ENCODE measurements at regions of chr20 and their contacts with region 1.

Region 1: GRCh38 chr20:51306503-51307358 is 235.8 kb downstream of the NFATC2 start:
- DNase-seq: peak in 1 of 2 donors; percentile 79
- H3K4me3 ChIP-seq: no peak overlapping the region
- H3K27ac ChIP-seq: no peak overlapping the region
- H3K4me1 ChIP-seq: no peaks in the 10 kb centered on the region
- H3K27me3 ChIP-seq: no peaks in the 10 kb centered on the region
- CTCF ChIP-seq: peak; percentile 64 to 91 (median 82)

Region 2: GRCh38 chr20:50987592-50988210 is 319.0 kb before region 1 on chr20:
- intact Hi-C with region 1: loop called (anchors 2 kb)
- DNase-seq: peak in 1 of 2 donors; percentile 87
- H3K4me3 ChIP-seq: no peak overlapping the region
- H3K27ac ChIP-seq: no peak overlapping the region
- H3K4me1 ChIP-seq: no peaks in the 10 kb centered on the region
- H3K27me3 ChIP-seq: no peaks in the 10 kb centered on the region
- CTCF ChIP-seq: peak; percentile 81 to 93 (median 87)

Measured in ascending aorta (tissue), 2 donors.